ENCODE measurements at regions of chr20 and their contacts with region 1.

Region 1: GRCh38 chr20:18287915-18288748 is at the start of gene ZNF133:
- DNase-seq: peak; percentile 95 to 99 (median 98)

Region 2: DNA sequence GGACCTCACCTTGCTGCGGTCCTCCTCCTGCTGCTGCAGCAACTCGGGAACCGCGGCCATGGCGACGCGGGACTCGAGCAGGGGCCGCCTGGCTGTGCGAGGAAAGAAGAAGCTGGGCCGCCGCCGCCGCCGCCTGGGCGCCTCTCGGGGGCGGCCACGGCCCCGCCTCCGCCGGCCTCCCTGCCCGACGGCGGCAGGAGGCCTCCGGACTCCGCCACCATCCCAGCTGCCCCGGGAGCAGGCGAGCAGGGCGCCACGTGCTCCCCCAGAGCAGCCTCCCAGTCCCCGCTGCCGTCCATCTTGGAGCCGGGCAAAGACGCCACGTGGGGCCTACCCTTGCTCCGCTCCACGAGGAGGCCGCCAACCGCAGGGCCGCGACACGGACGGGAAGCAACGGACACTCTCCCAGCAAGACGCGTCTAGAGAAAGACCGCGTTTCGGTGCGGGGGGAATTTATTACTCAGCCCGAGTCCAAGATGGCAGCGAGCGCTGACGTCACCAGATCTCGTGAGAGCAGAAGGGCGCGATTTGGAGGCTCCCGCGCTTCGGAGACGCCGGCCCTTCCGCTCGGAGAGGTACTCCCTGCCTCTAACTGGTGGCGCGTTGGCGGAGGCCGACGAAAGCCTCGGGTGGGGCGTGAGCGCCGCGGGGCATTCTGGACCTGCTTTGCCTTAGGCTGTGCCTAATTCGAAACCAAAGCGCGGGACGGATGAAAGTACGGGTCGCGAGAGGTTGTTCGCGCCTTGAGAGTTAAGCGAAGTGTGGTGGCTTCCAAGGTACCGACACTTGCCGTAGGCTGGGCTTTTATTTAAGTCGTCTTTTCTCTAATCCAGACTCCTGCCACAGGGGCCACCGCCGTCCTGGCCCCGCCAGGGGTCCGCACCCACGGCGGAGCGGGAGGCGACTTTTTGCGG is 319.5 kb before region 1 on chr20 and contains the starts of genes MGME1 and SNX5:
- intact Hi-C with region 1: loop called (anchors 10 kb)
- DNase-seq: peak; percentile 97 to 100 (median 100)

Region 3: GRCh38 chr20:18137412-18138265 is 150.5 kb before region 1 on chr20 and contains the starts of genes KAT14 and PET117:
- intact Hi-C with region 1: loop called (anchors 5 kb)
- DNase-seq: peak; percentile 82 to 98 (median 89)

Region 4: GRCh38 chr20:18164356-18164755 is 123.8 kb before region 1 on chr20:
- intact Hi-C with region 1: no loop called
- DNase-seq: no peak

Region 5: DNA sequence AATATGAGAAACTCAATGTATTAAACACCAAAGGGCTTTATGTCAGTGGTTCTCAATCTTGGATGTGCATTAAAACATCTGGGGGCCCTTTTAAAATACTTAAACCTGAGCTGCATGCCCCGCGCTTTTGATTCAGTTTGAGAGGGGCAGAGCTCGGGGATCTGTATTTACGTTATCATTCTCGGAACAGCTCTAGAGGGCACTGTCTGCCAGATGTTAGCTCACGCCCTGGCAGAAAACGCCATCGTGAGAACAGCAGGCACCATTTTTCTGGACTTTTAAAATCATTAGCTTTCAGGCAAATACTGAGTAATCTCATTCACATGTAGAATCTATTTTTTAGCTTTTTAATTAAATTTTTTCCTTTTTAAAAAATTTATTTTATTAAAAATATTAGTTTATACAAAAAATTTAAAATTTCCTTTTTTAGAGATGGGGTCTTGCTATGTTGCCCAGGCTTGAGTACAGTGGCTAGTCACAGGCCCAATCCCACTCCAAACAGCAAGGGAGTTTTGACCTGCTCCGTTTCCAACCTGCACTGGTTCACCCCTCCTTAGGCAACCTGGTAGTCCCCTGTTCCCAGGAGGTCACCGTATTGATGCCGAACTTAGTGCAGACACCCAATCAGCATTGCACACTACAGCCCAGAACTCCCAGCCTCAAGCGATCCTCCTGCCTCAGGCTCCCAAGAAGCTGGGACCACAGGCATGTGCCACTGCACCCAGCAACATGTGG is 29.8 kb before region 1 on chr20:
- intact Hi-C with region 1: no loop called
- DNase-seq: peak in 1 of 10 donors; percentile 81

Region 6: DNA sequence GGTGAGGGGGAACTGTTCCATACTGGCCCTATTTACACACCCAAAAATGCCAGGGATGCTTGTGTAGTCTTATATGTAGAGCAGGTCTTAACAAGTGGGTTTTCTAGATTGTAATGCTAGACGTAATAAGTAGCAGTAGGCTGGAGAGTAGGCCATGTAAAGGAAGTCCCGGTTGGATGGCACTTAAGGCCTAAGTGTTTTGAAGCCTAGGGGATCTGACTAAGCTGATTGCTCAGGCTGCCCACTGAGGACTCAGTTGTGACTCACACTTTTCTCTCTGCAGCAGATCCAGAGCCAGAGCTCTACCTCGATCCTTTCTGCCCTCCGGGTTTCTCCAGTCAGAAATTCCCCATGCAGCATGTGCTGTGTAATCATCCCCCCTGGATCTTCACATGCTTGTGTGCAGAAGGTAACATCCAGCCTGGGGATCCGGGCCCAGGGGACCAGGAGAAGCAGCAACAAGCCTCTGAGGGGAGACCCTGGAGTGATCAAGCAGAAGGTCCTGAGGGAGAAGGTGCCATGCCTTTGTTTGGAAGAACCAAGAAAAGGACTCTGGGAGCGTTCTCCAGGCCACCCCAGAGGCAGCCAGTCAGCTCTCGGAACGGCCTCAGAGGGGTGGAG is 26.8 kb after region 1 on chr20:
- intact Hi-C with region 1: no loop called
- DNase-seq: peak in 1 of 10 donors; percentile 51

Region 7: GRCh38 chr20:18466894-18467730 is 179.0 kb after region 1 on chr20 and contains the starts of genes DZANK1 and POLR3F:
- intact Hi-C with region 1: loop called (anchors 5 kb)
- DNase-seq: peak; percentile 94 to 100 (median 97)